Caco-2 (cell line): ENCODE measurements at regions of chr5 and their contacts with region 1.

Region 1: GRCh38 chr5:65742565-65743231 is 20.7 kb downstream of the NLN start:
- DNase-seq: peak; percentile 42 to 47
- H3K4me3 ChIP-seq: no peak overlapping the region
- H3K4me3 Mint-ChIP-seq: no peak overlapping the region
- H3K27ac Mint-ChIP-seq: no peak overlapping the region
- H3K4me1 ChIP-seq: no peaks in the 10 kb centered on the region
- H3K4me1 Mint-ChIP-seq: peaks cover 22% of the 10 kb centered on the region
- H3K27me3 ChIP-seq: no peaks in the 10 kb centered on the region
- H3K27me3 Mint-ChIP-seq: no peaks in the 10 kb centered on the region
- CTCF ChIP-seq: peak; percentile 55 to 76

Region 2: GRCh38 chr5:65825408-65826328 is 83.0 kb after region 1 on chr5:
- CTCF ChIA-PET with region 1: no interaction called
- POLR2A ChIA-PET with region 1: no interaction called
- intact Hi-C with region 1: no loop called
- DNase-seq: no peak
- H3K4me3 ChIP-seq: no peak overlapping the region
- H3K4me3 Mint-ChIP-seq: no peak overlapping the region
- H3K27ac Mint-ChIP-seq: no peak overlapping the region
- H3K4me1 ChIP-seq: peaks cover 23% of the 10 kb centered on the region
- H3K4me1 Mint-ChIP-seq: peaks cover 14% of the 10 kb centered on the region
- H3K27me3 ChIP-seq: no peaks in the 10 kb centered on the region
- H3K27me3 Mint-ChIP-seq: no peaks in the 10 kb centered on the region
- CTCF ChIP-seq: no peak

Region 3: DNA sequence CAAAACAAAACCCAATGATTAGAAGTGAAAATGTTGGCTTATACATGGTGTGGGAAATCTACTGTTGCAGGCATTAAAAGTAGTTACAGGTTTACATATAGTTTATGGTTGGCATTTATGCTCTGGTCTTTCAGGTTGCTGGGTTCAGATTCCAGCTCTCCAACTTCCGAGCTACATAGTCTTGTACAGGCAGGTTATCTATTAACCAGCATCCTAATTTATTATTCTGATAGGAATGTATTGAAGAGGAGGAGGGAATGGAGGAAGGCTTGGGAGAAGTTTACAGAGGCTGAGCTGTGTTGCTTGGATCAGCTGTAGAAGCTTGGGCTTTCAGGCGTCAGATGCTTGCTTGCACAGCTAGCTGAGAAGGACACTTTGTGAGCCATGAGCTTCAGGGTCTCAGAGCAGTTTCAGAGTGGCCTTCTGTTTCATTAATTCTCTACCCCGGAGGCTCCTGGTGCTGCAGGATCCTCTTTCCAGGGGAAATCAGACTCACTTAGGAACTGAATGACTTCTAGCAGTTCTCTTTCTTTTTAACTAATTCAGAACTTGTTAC is 172.0 kb after region 1 on chr5:
- CTCF ChIA-PET with region 1: no interaction called
- POLR2A ChIA-PET with region 1: no interaction called
- intact Hi-C with region 1: loop called (anchors 1 kb)
- DNase-seq: peak; percentile 30 to 46
- H3K4me3 ChIP-seq: no peak overlapping the region
- H3K4me3 Mint-ChIP-seq: peak overlapping the region; percentile 47
- H3K27ac Mint-ChIP-seq: peak overlapping the region; percentile 17
- H3K4me1 ChIP-seq: peaks cover 15% of the 10 kb centered on the region
- H3K4me1 Mint-ChIP-seq: peaks cover 10% of the 10 kb centered on the region
- H3K27me3 ChIP-seq: no peaks in the 10 kb centered on the region
- H3K27me3 Mint-ChIP-seq: no peaks in the 10 kb centered on the region
- CTCF ChIP-seq: no peak

Region 4: GRCh38 chr5:66039296-66039695 is 296.6 kb after region 1 on chr5:
- CTCF ChIA-PET with region 1: no interaction called
- POLR2A ChIA-PET with region 1: no interaction called
- intact Hi-C with region 1: loop called (anchors 10 kb)
- DNase-seq: no peak
- H3K4me3 ChIP-seq: no peak overlapping the region
- H3K4me3 Mint-ChIP-seq: no peak overlapping the region
- H3K27ac Mint-ChIP-seq: no peak overlapping the region
- H3K4me1 ChIP-seq: peaks cover 6% of the 10 kb centered on the region
- H3K4me1 Mint-ChIP-seq: peaks cover 13% of the 10 kb centered on the region
- H3K27me3 ChIP-seq: no peaks in the 10 kb centered on the region
- H3K27me3 Mint-ChIP-seq: no peaks in the 10 kb centered on the region
- CTCF ChIP-seq: no peak